MCF 10A (cell line): ENCODE measurements at regions of chr9 and their contacts with region 1.

Region 1: GRCh38 chr9:18208154-18209059 is 265.5 kb upstream of the ADAMTSL1 start:
- DNase-seq: peak; percentile 71
- H3K4me3 Mint-ChIP-seq: no peak overlapping the region
- H3K27ac Mint-ChIP-seq: no peak overlapping the region
- H3K4me1 Mint-ChIP-seq: no peaks in the 10 kb centered on the region
- H3K27me3 Mint-ChIP-seq: peaks cover 62% of the 10 kb centered on the region
- CTCF ChIP-seq: peak; percentile 54

Region 2: GRCh38 chr9:17706347-17706746 is 502.1 kb before region 1 on chr9:
- CTCF ChIA-PET with region 1: no interaction called
- POLR2A ChIA-PET with region 1: no interaction called
- intact Hi-C with region 1: no loop called
- DNase-seq: no peak
- H3K4me3 Mint-ChIP-seq: no peak overlapping the region
- H3K27ac Mint-ChIP-seq: no peak overlapping the region
- H3K4me1 Mint-ChIP-seq: no peaks in the 10 kb centered on the region
- H3K27me3 Mint-ChIP-seq: peaks cover 25% of the 10 kb centered on the region
- CTCF ChIP-seq: no peak

Region 3: GRCh38 chr9:17802249-17802857 is 406.1 kb before region 1 on chr9:
- CTCF ChIA-PET with region 1: interaction called, 16 read pairs
- POLR2A ChIA-PET with region 1: interaction called, 4 read pairs
- intact Hi-C with region 1: no loop called
- DNase-seq: peak; percentile 28
- H3K4me3 Mint-ChIP-seq: no peak overlapping the region
- H3K27ac Mint-ChIP-seq: no peak overlapping the region
- H3K4me1 Mint-ChIP-seq: no peaks in the 10 kb centered on the region
- H3K27me3 Mint-ChIP-seq: peaks cover 33% of the 10 kb centered on the region
- CTCF ChIP-seq: peak; percentile 52

Region 4: DNA sequence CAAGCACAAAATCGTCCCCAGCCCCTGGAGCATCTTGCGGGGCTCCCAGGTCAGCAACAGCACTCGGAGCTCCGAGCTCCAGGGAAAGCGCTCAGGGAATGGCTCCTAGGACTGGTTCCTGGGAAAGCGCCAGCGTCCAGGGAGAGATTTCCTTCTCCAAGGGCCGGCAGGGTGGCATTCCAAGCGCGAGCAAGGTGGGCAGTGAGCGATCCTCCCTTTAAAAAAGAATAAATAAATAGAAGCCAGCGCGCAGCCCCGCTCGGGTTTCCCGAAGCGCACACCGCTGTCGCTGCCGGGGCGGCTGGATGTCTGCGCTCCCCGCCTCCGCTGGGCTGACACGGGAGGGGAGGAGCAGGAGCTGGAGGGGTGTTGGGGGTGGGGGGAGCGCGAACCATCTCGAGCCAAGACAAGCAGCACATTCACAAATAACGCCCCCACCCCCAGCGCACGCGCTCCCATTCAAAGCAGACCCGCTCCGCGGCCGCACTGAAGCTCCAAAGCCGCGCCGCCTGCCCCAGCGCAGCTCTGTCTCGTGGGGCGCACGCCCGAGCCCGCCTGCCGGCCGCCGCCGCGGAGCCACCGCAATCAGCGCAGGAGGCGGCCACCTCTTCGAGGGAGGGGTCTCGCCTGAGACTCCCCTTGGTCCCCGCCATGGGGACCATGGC is 302.1 kb before region 1 on chr9:
- CTCF ChIA-PET with region 1: no interaction called
- POLR2A ChIA-PET with region 1: no interaction called
- intact Hi-C with region 1: no loop called
- DNase-seq: no peak
- H3K4me3 Mint-ChIP-seq: no peak overlapping the region
- H3K27ac Mint-ChIP-seq: no peak overlapping the region
- H3K4me1 Mint-ChIP-seq: no peaks in the 10 kb centered on the region
- H3K27me3 Mint-ChIP-seq: peaks cover 20% of the 10 kb centered on the region
- CTCF ChIP-seq: no peak

Region 5: DNA sequence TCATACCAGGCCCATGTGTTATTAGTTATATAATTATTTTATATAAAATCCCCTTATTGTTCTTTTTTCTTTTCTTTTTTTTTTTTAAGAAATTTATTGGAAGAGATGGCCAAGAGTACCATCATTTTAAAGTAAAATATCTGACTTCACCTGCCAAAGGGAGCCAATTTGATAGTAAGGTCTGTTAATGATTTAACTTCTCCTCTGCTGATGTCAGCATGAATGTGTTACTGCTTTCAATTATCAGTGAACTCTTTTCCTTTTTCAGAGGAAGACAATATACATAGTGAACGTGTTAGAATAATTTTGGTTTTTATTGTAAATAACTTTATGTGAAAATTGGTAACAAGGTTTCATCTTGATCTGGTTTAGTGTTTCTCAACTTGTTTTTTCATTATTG is 219.9 kb before region 1 on chr9:
- CTCF ChIA-PET with region 1: no interaction called
- POLR2A ChIA-PET with region 1: no interaction called
- intact Hi-C with region 1: no loop called
- DNase-seq: no peak
- H3K4me3 Mint-ChIP-seq: no peak overlapping the region
- H3K27ac Mint-ChIP-seq: no peak overlapping the region
- H3K4me1 Mint-ChIP-seq: no peaks in the 10 kb centered on the region
- H3K27me3 Mint-ChIP-seq: peaks cover 19% of the 10 kb centered on the region
- CTCF ChIP-seq: no peak

Region 6: DNA sequence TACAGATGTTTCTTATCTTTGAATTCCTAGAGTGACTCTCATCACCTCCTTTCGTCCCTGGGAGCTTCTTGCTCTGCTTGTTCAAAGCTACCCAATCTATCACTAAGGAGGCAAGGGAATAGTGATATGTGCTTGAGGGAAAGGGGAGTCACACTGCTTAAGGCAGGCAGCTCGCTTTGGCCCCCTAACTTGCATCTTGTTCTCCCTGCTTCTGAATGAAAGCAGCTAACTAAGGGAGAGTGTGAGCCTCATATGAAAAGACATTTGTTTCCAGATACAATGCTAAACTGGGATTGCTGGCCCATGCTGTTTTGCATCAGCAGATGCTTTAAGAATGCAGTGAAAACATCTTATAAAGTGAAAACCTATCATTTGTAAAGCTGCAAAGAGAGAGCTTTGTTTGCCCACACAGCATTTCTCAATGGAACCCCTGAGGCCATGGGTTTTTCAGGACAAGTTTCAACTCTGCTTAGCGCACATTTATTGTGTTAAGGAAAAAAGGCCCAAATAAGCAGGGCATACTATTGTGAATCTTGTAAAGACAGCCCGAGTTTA is 102.3 kb before region 1 on chr9:
- CTCF ChIA-PET with region 1: no interaction called
- POLR2A ChIA-PET with region 1: no interaction called
- intact Hi-C with region 1: no loop called
- DNase-seq: no peak
- H3K4me3 Mint-ChIP-seq: no peak overlapping the region
- H3K27ac Mint-ChIP-seq: no peak overlapping the region
- H3K4me1 Mint-ChIP-seq: no peaks in the 10 kb centered on the region
- H3K27me3 Mint-ChIP-seq: peaks cover 29% of the 10 kb centered on the region
- CTCF ChIP-seq: no peak

Region 7: GRCh38 chr9:18194316-18194715 is 14.1 kb before region 1 on chr9:
- CTCF ChIA-PET with region 1: interaction called, 17 read pairs
- POLR2A ChIA-PET with region 1: no interaction called
- intact Hi-C with region 1: no loop called
- DNase-seq: no peak
- H3K4me3 Mint-ChIP-seq: no peak overlapping the region
- H3K27ac Mint-ChIP-seq: no peak overlapping the region
- H3K4me1 Mint-ChIP-seq: no peaks in the 10 kb centered on the region
- H3K27me3 Mint-ChIP-seq: peaks cover 19% of the 10 kb centered on the region
- CTCF ChIP-seq: no peak